Psoas muscle (tissue), 8 donors: ENCODE measurements at regions of chr5 and their contacts with region 1.

Region 1: GRCh38 chr5:95835682-95836385 is 13.3 kb upstream of the GLRX start:
- DNase-seq: peak in 1 of 2 donors; percentile 70
- ATAC-seq: peak; percentile 5 to 27 (median 12)
- H3K4me3 ChIP-seq: peak overlapping the region; percentile 83
- H3K27ac ChIP-seq: peak overlapping the region; percentile 97
- H3K4me1 ChIP-seq: peaks cover 40% of the 10 kb centered on the region
- H3K27me3 ChIP-seq: no peaks in the 10 kb centered on the region
- CTCF ChIP-seq: no peak

Region 2: GRCh38 chr5:95822542-95823181 is 13.2 kb before region 1 on chr5 and contains the start of gene GLRX:
- intact Hi-C with region 1: loop called in 1 of 2 experiments (anchors 2 kb)
- DNase-seq: peak; percentile 74 to 84
- ATAC-seq: peak; percentile 70 to 75 (median 72)
- H3K4me3 ChIP-seq: peak within 1 kb of the TSS; percentile 95
- H3K27ac ChIP-seq: peak within 1 kb of the TSS; percentile 95
- H3K4me1 ChIP-seq: peaks cover 46% of the 10 kb centered on the region
- H3K27me3 ChIP-seq: no peaks in the 10 kb centered on the region
- CTCF ChIP-seq: no peak
- total RNA-seq, gene GLRX: 131 to 888 (median 651) TPM